Activated naive CD4-positive, alpha-beta T cell treated with anti-CD3 and anti-CD28 coated beads for 36 hours (primary cell): ENCODE measurements at regions of chr13 and their contacts with region 1.

Region 1: DNA sequence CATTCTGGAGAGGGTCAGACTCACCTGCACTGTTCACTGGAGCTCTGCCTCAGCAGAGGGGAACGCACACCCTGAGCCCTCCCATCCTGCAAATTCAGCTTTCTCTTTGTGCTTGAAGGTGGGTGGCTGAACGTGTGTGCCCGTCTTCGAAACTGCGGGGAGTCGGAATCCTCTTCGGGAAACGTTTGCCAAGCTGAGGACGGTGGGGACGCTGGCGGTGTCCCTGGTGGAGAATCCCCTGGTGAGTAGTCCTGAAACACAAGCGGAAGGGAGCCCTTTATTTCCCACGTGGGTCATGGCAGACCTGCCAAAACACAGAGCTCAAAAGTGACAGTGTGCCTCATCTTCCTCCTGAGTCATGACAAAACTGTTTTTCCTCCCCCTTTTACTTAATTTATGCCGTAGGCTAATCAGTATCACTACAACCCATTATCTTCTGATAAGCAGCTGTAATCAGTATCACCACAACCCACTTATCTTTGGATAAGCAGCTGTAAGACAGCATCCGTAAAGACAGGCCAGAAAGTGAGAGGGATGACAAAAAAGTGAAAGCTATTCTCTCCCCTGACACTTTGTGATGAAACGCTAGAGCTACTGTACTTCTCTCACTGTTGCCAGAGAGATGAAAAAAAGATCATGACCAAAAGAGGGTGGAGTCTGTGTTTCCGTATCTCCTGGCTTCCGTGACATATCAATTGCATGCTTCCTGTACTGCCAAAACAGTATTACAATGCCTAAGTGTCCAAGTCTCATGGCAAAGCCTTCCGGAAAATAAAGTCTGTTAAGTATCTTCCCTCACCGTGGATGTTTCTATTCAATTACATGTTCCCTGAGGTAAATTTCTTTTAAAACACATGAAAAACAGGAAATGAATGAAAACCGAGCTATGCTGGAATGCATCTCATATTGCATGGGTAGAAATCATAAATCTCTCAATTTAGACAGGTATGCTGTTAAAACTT is 155.5 kb downstream of the TBC1D4 start:
- DNase-seq: peak; percentile 83
- H3K4me3 Mint-ChIP-seq: peak overlapping the region; percentile 92
- H3K27ac Mint-ChIP-seq: peak overlapping the region; percentile 98
- H3K4me1 Mint-ChIP-seq: peaks cover 26% of the 10 kb centered on the region
- H3K27me3 Mint-ChIP-seq: no peaks in the 10 kb centered on the region

Region 2: DNA sequence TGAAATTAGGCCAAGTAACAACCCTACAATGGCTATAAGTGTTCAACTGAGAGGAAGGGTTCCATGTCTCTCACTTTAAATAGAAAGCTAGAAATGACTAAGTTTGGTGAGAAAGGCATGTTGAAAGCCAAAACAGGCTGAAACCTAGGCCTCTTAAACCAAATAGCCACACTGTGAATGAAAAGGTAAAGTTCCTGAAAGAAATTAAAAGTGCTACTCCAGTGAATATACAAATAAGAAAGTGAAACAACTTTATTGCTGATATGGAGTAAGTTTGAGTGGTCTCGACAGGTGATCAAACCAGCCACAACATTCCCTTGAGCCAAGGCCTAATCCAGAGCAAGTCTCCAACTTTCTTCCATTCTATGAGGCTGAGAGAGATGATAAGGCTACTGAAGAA is 1401.8 kb before region 1 on chr13:
- CTCF ChIA-PET with region 1: no interaction called
- intact Hi-C with region 1: loop called (anchors 5 kb)
- DNase-seq: no peak
- H3K4me3 Mint-ChIP-seq: peak overlapping the region; percentile 8
- H3K27ac Mint-ChIP-seq: no peak overlapping the region
- H3K4me1 Mint-ChIP-seq: peaks cover 70% of the 10 kb centered on the region
- H3K27me3 Mint-ChIP-seq: no peaks in the 10 kb centered on the region

Region 3: DNA sequence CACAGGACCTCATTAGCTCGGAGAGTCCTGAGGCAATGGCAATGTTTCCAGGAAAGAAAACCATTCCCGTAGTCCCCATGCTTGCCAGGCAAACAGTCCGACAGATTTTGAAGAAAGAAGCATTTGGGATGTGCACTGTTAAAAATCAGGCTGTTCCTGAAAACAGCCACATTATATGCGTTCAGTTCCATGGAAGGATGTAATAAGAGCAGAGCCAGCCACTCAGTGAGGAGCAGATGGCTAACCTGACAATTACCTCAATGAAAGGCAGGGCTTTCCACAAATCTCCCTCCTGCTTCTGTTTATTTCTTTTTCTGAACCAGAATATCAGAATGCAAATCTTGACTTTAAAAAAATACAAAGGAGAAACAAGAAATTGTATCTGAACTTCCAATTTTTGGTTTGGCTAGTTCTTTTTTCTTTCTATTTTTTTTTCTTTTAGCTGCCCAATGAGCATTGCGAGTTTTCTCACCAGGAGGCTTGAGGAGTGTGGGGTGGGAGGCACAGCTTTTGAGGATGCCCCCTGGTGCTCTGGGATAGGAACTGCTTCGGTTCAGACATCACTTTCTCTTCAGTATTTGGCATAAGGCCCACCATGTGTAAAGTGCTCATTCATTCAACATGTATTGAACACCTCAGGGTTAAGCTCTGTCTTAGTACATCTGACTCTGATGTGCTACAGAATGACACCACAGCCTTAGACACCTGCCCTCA is 31.3 kb after region 1 on chr13:
- CTCF ChIA-PET with region 1: interaction called, 15 read pairs
- intact Hi-C with region 1: loop called (anchors 1 kb)
- DNase-seq: peak; percentile 61
- H3K4me3 Mint-ChIP-seq: no peak overlapping the region
- H3K27ac Mint-ChIP-seq: no peak overlapping the region
- H3K4me1 Mint-ChIP-seq: peaks cover 5% of the 10 kb centered on the region
- H3K27me3 Mint-ChIP-seq: no peaks in the 10 kb centered on the region

Region 4: DNA sequence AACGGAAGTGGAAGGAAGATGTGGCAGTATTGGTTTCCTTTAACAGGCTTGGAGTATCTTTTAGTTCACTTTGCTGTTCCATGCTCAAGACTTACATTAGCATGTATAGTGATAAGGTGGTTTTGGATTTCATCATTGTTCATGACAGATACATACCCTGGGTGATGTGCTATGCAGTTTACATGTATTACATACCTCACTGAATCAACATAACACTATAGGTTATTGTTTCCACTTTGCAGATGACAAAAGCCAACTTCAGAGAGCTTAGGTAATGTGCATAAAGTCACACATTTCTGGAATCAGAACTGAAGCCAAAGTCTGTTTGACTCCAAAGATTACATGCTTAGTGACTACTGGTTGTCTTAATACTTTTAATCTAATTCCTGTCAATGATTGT is 204.1 kb after region 1 on chr13:
- CTCF ChIA-PET with region 1: no interaction called
- intact Hi-C with region 1: loop called (anchors 1 kb)
- DNase-seq: no peak
- H3K4me3 Mint-ChIP-seq: no peak overlapping the region
- H3K27ac Mint-ChIP-seq: peak overlapping the region; percentile 46
- H3K4me1 Mint-ChIP-seq: peaks cover 48% of the 10 kb centered on the region
- H3K27me3 Mint-ChIP-seq: no peaks in the 10 kb centered on the region

Region 5: DNA sequence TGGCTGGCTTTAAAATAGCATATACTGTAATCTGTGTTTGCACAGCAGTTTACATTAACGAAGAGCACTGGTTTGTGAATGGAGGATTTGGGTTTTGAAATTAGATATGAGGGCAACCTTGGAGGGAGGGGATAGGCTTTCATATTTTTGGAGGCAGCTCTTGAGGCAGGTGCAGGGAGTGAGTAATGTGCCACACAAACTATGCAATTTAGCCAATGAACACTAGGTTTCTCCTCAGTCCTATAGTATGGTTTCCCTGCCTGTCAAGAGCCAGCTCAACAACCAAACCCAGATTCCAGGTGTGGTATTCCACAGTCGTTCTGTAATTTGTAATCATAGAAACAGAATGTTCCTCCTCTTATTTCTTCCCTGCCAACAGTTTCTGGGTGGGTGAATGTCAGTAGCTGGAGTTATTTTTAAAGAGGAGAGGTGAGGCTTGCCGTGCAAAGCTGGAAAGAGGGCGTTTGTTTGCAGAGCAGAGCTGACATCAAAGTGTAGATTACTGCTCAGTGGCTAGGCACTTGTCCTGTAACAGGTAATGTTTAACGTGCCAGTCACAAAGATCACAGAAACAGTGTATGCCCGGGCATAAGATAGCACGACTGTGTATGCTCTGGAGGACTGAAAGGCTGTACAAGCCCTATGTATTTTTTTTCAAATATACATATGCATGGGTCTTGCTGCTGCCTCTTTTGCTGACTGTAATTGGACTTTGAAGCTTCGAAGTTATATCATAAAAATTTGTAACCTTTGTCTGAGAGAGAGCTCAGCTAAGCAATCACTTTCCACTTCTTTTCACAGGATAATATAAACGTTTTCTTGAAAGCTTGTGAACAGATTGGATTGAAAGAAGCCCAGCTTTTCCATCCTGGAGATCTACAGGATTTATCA is 433.9 kb after region 1 on chr13:
- CTCF ChIA-PET with region 1: no interaction called
- intact Hi-C with region 1: loop called (anchors 1 kb)
- DNase-seq: peak; percentile 31
- H3K4me3 Mint-ChIP-seq: peak overlapping the region; percentile 67
- H3K27ac Mint-ChIP-seq: peak overlapping the region; percentile 11
- H3K4me1 Mint-ChIP-seq: peaks cover 72% of the 10 kb centered on the region
- H3K27me3 Mint-ChIP-seq: peaks cover 4% of the 10 kb centered on the region

Region 6: GRCh38 chr13:76991796-76992547 is 1665.5 kb after region 1 on chr13 and contains the start of gene CLN5:
- CTCF ChIA-PET with region 1: no interaction called
- intact Hi-C with region 1: loop called (anchors 5 kb)
- DNase-seq: peak; percentile 95
- H3K4me3 Mint-ChIP-seq: peak within 1 kb of the TSS; percentile 95
- H3K27ac Mint-ChIP-seq: peak within 1 kb of the TSS; percentile 97
- H3K4me1 Mint-ChIP-seq: peaks cover 39% of the 10 kb centered on the region
- H3K27me3 Mint-ChIP-seq: no peaks in the 10 kb centered on the region
- total RNA-seq, gene CLN5: 13.6 to 14.6 TPM